ENCODE measurements at regions of chr12 and their contacts with region 1.

Region 1: DNA sequence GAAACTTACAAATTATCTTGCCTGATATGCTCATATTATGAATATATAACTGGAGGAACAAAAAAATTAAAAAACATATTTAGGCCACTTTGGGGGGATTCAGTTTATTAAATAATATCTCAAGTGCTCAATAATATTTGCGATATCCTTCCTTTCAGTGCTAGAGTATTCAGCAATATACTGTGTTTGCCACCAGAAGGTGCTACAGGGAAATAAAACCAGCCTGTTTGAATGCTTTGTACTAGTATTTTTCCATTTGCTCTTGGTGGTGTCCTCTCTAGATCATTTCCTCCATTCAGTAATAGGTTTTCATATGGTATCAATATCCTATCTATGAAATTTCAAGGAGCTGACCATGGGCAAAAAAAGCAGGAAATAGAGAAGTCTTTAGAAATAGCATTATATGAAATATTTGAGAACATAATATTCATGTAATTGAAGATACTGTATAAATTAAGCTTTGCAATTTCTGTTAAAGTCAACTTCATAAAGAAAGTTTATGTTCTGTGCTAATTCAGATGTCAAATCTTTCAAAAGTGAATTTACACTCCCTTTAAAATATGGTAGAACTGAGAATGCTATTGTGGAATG is 106.2 kb upstream of the NAV3 start:
- DNase-seq: no peak
- H3K4me3 Mint-ChIP-seq: no peak overlapping the region
- H3K27ac Mint-ChIP-seq: no peak overlapping the region
- H3K4me1 Mint-ChIP-seq: no peaks in the 10 kb centered on the region
- H3K27me3 Mint-ChIP-seq: no peaks in the 10 kb centered on the region

Region 2: GRCh38 chr12:76836633-76837032 is 887.8 kb before region 1 on chr12:
- CTCF ChIA-PET with region 1: no interaction called
- intact Hi-C with region 1: no loop called
- DNase-seq: no peak
- H3K4me3 Mint-ChIP-seq: no peak overlapping the region
- H3K27ac Mint-ChIP-seq: no peak overlapping the region
- H3K4me1 Mint-ChIP-seq: no peaks in the 10 kb centered on the region
- H3K27me3 Mint-ChIP-seq: no peaks in the 10 kb centered on the region

Region 3: GRCh38 chr12:77696183-77696582 is 28.3 kb before region 1 on chr12:
- CTCF ChIA-PET with region 1: no interaction called
- intact Hi-C with region 1: no loop called
- DNase-seq: no peak
- H3K4me3 Mint-ChIP-seq: no peak overlapping the region
- H3K27ac Mint-ChIP-seq: no peak overlapping the region
- H3K4me1 Mint-ChIP-seq: no peaks in the 10 kb centered on the region
- H3K27me3 Mint-ChIP-seq: no peaks in the 10 kb centered on the region

Region 4: DNA sequence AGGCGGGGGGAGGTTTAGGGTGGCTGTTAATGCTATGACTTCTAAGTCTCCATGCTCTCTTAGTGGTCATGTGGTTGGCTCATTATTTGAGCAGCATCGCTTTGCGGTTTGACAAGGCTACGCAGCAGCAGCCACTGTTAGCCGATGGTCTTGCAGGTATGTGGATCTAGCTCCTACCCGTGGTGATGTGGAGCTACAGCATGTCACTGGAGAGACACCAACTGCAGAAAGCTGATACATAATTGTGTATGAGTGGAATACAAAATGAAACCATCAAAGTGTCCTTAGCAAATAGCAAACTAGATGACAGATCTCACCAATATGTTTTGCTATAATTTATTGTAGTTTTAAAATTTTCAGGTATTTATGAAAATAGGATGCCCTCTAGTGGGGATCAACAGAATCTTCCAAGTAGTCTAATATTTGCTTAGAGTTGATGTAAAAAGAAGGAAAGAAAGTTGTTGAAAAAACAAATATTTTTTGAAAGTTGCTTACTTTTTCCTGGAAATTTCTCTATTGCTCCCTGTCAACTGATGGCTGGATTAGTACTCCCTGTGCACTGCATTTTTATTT is 201.2 kb after region 1 on chr12:
- CTCF ChIA-PET with region 1: no interaction called
- intact Hi-C with region 1: loop called (anchors 10 kb)
- DNase-seq: peak; percentile 24
- H3K4me3 Mint-ChIP-seq: no peak overlapping the region
- H3K27ac Mint-ChIP-seq: no peak overlapping the region
- H3K4me1 Mint-ChIP-seq: no peaks in the 10 kb centered on the region
- H3K27me3 Mint-ChIP-seq: no peaks in the 10 kb centered on the region

Measured in activated naive CD4-positive, alpha-beta T cell treated with anti-CD3 and anti-CD28 coated beads for 36 hours (primary cell).